IMR-90 (cell line): ENCODE measurements at regions of chr20 and their contacts with region 1.

Region 1: GRCh38 chr20:58327211-58327610 is 17.7 kb downstream of the RAB22A start:
- DNase-seq: no peak
- ATAC-seq: peak; percentile 44
- H3K4me3 ChIP-seq: no peak overlapping the region
- H3K27ac ChIP-seq: no peak overlapping the region
- H3K4me1 ChIP-seq: peaks cover 5% of the 10 kb centered on the region; the same call in 1 of the 2 replicates
- H3K27me3 ChIP-seq: no peaks in the 10 kb centered on the region
- CTCF ChIP-seq: no peak
- POLR2A ChIP-seq: no peak
- RAD21 ChIP-seq: no peak

Region 2: GRCh38 chr20:58294477-58295449 is 32.4 kb before region 1 on chr20:
- CTCF ChIA-PET with region 1: no interaction called
- POLR2A ChIA-PET with region 1: no interaction called
- dilution Hi-C with region 1: no loop called
- in situ Hi-C with region 1: no loop called
- intact Hi-C with region 1: no loop called
- DNase-seq: no peak
- ATAC-seq: no peak
- H3K4me3 ChIP-seq: no peak overlapping the region
- H3K27ac ChIP-seq: no peak overlapping the region
- H3K4me1 ChIP-seq: peaks cover 4% of the 10 kb centered on the region
- H3K27me3 ChIP-seq: no peaks in the 10 kb centered on the region
- CTCF ChIP-seq: no peak
- POLR2A ChIP-seq: no peak
- RAD21 ChIP-seq: no peak

Region 3: GRCh38 chr20:58309575-58310290 is 17.5 kb before region 1 on chr20 and contains the start of gene RAB22A:
- CTCF ChIA-PET with region 1: no interaction called
- POLR2A ChIA-PET with region 1: no interaction called
- dilution Hi-C with region 1: no loop called
- in situ Hi-C with region 1: no loop called
- intact Hi-C with region 1: no loop called
- DNase-seq: peak; percentile 77
- ATAC-seq: peak; percentile 94
- H3K4me3 ChIP-seq: peak within 1 kb of the TSS; percentile 98
- H3K27ac ChIP-seq: peak within 1 kb of the TSS; percentile 75
- H3K4me1 ChIP-seq: peaks cover 4% of the 10 kb centered on the region; the same call in 1 of the 2 replicates
- H3K27me3 ChIP-seq: no peaks in the 10 kb centered on the region
- CTCF ChIP-seq: no peak
- POLR2A ChIP-seq: peak; percentile 93
- RAD21 ChIP-seq: peak; percentile 19; the same call in 1 of the 2 replicates
- total RNA-seq, gene RAB22A: 8.2 and 16.1 TPM in 2 replicates

Region 4: GRCh38 chr20:58374906-58375791 is 47.9 kb after region 1 on chr20:
- CTCF ChIA-PET with region 1: no interaction called
- POLR2A ChIA-PET with region 1: no interaction called
- dilution Hi-C with region 1: no loop called
- in situ Hi-C with region 1: no loop called
- intact Hi-C with region 1: loop called (anchors 5 kb)
- DNase-seq: peak; percentile 68
- ATAC-seq: peak; percentile 91
- H3K4me3 ChIP-seq: no peak overlapping the region
- H3K27ac ChIP-seq: no peak overlapping the region
- H3K4me1 ChIP-seq: no peaks in the 10 kb centered on the region; the same call in 1 of the 2 replicates
- H3K27me3 ChIP-seq: no peaks in the 10 kb centered on the region
- CTCF ChIP-seq: no peak
- POLR2A ChIP-seq: no peak
- RAD21 ChIP-seq: no peak